Activated CD4-positive, alpha-beta T cell treated with anti-CD3 and anti-CD28 coated beads for 36 hours (primary cell): ENCODE measurements at regions of chr5 and their contacts with region 1.

Region 1: DNA sequence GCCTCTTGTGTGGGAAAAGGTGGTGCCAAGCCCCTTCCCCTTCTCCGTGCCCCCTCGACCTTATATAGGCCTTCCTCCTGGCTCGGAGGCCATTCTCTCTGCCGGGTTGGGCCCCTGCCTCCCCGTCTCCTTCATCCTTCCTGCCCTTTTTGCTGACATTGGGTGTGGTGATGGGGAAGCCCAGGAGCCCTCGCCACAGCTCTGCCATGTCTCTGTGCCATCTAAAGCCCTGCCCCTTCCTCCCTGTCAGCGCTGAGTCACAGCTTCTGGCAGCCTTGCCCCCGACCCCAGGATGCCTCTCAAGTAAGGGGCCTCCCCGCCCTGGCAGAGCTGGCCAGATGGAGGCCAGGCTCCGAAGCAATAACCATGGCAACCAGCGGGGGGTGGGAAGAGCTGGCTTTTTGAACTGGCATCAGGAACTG is 30.4 kb downstream of the JADE2 start:
- DNase-seq: peak; percentile 96
- ATAC-seq: peak; percentile 97
- H3K4me3 Mint-ChIP-seq: peak overlapping the region; percentile 72
- H3K27ac Mint-ChIP-seq: peak overlapping the region; percentile 99
- H3K4me1 Mint-ChIP-seq: peaks cover 38% of the 10 kb centered on the region
- H3K27me3 Mint-ChIP-seq: no peaks in the 10 kb centered on the region

Region 2: DNA sequence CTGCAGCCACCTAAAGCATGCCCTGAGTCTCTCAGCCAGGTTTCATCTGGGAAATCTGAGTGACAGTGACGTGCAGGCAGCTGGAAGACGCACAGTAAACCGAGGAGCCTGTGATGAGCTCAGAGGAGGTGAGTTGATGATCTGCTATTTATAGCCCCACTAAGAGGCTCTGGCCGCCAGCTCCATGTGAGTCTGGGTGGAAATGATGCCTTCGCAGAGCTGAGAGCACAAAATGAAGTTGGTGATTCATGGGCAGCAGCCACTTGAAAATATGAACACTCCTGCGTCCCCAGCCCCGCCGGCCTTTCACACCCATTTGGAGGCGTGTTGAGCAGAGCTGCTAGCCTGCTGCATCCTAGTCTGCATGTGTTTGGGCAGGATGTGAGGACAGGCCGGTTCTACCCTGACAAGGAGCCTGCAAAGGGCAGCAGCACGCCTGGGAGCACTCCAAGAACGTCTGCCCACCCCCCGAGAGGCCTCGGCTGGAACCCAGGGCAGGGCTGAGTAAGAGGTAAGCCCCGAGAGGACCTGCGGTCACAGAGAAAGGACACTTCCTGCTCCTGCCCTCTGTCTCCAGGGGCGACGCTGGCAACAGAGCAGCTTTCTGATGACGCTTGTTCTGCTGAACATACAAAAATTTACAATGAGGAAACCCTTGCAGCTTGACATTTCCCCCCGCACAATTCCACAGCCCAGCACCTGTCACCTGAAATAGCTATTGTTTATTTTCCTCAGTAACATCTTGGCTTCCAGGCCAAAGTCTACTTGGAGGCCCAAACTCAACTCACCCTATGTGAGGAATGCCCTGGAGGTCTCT is 119.2 kb before region 1 on chr5:
- CTCF ChIA-PET with region 1: interaction called, 4 read pairs
- POLR2A ChIA-PET with region 1: interaction called, 15 read pairs
- intact Hi-C with region 1: no loop called
- DNase-seq: peak; percentile 78
- ATAC-seq: peak; percentile 80
- H3K4me3 Mint-ChIP-seq: no peak overlapping the region
- H3K27ac Mint-ChIP-seq: peak overlapping the region; percentile 32
- H3K4me1 Mint-ChIP-seq: peaks cover 35% of the 10 kb centered on the region
- H3K27me3 Mint-ChIP-seq: no peaks in the 10 kb centered on the region

Region 3: DNA sequence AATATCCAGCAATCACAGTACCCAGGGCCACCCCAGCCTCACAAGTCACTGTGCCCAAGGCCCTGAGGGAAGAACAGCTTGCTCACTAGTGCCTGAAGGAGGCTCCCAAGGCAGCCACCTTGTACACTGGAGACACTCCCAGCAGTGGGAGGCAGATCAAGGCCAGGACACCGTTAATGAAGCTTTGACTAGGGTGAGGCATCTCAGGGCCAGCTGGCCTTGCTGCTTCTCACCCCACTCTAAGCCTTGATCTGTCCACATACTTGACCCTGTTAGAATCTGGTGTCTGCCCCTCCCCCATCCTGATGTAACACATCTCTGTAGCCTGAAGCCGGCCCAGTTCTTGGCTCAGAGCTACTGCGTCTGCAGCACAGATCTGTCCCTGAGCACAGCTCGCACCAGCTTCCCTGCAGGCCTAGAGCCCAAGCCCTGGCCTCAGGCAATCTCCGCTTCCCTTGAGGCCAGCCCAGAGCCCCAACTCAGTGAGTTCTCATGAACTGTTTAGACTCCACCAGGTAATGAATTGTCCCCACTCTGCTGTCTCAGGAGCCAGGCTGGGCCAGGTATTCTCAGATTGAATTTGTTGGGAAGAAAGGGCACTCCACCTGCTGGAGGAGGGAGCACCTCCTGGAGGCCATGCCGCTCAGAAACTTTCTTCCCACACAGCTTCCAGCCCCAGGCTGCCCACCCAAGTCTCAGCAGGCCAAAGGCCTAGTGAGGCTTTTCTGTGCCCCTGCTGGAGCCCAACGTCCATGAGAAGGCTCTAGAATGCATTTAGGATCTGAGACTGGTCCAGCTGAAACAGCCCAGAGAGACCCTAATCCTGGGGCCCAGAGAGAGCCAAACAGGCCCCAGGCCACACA is 43.9 kb before region 1 on chr5:
- CTCF ChIA-PET with region 1: no interaction called
- POLR2A ChIA-PET with region 1: interaction called, 10 read pairs
- intact Hi-C with region 1: no loop called
- DNase-seq: peak; percentile 34
- ATAC-seq: no peak
- H3K4me3 Mint-ChIP-seq: no peak overlapping the region
- H3K27ac Mint-ChIP-seq: peak overlapping the region; percentile 38
- H3K4me1 Mint-ChIP-seq: peaks cover 36% of the 10 kb centered on the region
- H3K27me3 Mint-ChIP-seq: no peaks in the 10 kb centered on the region

Region 4: DNA sequence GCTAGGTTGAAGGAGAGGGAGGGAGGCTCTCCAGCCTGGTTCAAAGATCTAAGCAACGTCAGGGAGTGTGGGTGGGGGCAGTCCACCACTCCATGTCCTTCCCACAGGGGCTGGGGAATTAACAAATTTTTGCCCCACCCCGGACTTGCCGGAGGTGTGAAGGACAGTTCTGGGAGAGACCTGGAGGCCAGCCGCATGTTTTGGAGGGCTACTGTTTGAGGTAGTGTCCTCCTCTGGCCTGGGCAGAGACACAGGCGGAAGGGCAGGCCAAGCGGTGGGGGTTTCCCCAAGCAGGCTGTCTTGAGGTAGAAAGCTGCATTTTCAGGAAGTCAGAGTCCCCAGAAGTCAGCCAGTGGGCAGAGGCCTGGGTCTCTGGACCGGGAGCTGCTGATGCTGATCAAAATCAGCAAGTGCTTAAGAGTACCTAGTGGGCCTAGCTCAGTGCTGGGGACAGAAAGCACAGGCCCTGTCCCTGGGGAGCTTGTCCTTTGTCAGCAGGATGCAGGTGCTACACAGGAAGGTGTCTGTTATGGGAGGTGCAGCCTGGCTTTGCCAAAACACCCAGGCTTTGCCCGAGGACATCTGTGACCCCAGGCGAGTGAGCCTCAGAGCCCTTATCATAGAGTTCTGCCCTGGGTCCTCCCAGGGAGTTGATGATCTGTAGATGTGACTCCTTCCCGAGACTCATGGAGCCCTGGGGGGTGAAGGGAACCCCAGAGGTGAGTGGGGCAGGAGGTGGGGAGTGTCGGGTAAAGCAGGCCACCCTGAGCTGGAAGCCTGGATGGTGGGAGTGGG is 11.9 kb before region 1 on chr5:
- CTCF ChIA-PET with region 1: interaction called, 16 read pairs
- POLR2A ChIA-PET with region 1: interaction called, 4 read pairs
- intact Hi-C with region 1: loop called in 1 of 2 experiments (anchors 1 kb)
- DNase-seq: peak; percentile 71
- ATAC-seq: peak; percentile 79
- H3K4me3 Mint-ChIP-seq: peak overlapping the region; percentile 71
- H3K27ac Mint-ChIP-seq: peak overlapping the region; percentile 96
- H3K4me1 Mint-ChIP-seq: peaks cover 72% of the 10 kb centered on the region
- H3K27me3 Mint-ChIP-seq: no peaks in the 10 kb centered on the region